Gastrocnemius medialis (tissue), 4 donors: ENCODE measurements at regions of chr16 and their contacts with region 1.

Region 1: GRCh38 chr16:1385232-1385631 is 29.3 kb downstream of the UNKL start:
- DNase-seq: no peak
- ATAC-seq: no peak
- H3K4me3 ChIP-seq: no peak overlapping the region
- H3K27ac ChIP-seq: no peak overlapping the region
- H3K4me1 ChIP-seq: no peaks in the 10 kb centered on the region
- H3K27me3 ChIP-seq: no peaks in the 10 kb centered on the region
- CTCF ChIP-seq: no peak
- POLR2A ChIP-seq: no peak

Region 2: DNA sequence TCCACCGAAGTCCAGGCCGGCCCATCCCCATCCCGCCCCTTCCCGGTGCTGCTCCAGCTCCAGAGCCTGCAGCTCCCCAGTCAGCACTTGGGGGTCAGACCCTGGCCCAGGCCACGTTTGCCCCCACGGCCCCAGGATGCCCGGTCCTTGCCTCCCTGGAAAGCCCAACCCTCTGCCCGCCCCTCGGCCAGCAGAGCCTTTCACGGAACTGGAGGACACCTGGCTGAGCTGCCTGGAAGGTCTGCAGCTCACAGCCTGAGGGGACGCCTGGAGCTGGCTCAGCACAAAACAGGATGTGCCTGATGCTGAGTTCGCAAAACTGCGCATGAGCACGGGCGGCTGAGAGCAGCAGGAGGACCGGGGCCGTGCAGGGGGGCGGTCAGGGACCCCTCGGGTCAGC is 342.4 kb before region 1 on chr16:
- in situ Hi-C with region 1: no loop called
- intact Hi-C with region 1: loop called (anchors 5 kb)
- DNase-seq: no peak
- ATAC-seq: no peak
- H3K4me3 ChIP-seq: no peak overlapping the region
- H3K27ac ChIP-seq: no peak overlapping the region
- H3K4me1 ChIP-seq: no peaks in the 10 kb centered on the region
- H3K27me3 ChIP-seq: peaks cover 49 to 80% (median 72%) of the 10 kb centered on the region in 3 donors
- CTCF ChIP-seq: no peak
- POLR2A ChIP-seq: no peak

Region 3: GRCh38 chr16:1458336-1458976 is 73.2 kb after region 1 on chr16:
- in situ Hi-C with region 1: no loop called
- intact Hi-C with region 1: no loop called
- DNase-seq: no peak
- ATAC-seq: no peak
- H3K4me3 ChIP-seq: no peak overlapping the region
- H3K27ac ChIP-seq: no peak overlapping the region
- H3K4me1 ChIP-seq: no peaks in the 10 kb centered on the region
- H3K27me3 ChIP-seq: no peaks in the 10 kb centered on the region
- CTCF ChIP-seq: no peak
- POLR2A ChIP-seq: no peak